ENCODE measurements at regions of chr7 and their contacts with region 1.

Region 1: GRCh38 chr7:19754521-19755116 is 18.8 kb downstream of the TMEM196 start:
- DNase-seq: peak in 1 of 2 experiments; percentile 48
- H3K4me3 ChIP-seq: no peak overlapping the region
- H3K27ac ChIP-seq: no peak overlapping the region
- H3K4me1 ChIP-seq: 0 out of 2 replicates have a peak, but pooled peaks cover 5% of the 10 kb centered on the region
- H3K27me3 ChIP-seq: no peaks in the 10 kb centered on the region
- CTCF ChIP-seq: peak; percentile 99

Region 2: DNA sequence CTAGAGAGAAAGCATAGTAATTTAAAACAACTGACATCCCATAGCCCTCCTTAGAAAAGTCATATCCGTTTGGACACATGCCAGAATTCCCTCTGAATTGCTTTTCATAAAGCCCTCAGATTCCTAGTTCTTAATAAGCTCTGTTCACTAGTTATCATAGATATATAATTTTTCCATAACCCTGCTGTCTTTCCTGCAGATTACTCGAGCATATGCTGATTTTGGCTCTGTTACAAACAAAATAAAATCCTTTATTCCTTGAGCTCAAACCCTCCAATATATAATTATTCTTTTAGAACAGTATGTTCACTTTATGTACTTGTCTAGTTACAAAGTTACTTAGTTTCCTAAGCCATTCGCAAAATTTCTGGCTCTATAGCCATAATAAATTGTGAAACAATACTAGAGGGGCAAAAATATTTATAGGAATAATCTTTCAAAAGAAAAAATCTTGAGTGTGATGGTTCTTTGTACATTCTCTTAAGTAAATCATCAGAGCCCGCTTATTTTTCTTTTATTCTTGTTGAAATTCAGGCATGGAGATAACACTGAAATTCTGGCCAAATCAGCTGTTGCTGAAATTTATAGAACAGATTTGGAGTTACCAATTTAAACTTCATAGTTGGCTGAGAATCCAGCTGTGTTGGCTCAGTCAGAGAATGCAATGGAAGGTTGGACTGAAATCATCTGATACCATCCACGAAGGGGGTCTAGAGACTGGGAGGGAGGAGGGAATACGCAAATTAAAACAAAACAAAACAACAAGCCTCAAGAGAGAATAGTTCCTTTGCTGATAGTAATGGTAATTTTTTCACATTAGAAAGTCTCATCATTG is 164.9 kb after region 1 on chr7:
- CTCF ChIA-PET with region 1: no interaction called
- POLR2A ChIA-PET with region 1: no interaction called
- intact Hi-C with region 1: loop called (anchors 10 kb)
- DNase-seq: no peak
- H3K4me3 ChIP-seq: no peak overlapping the region
- H3K27ac ChIP-seq: no peak overlapping the region
- H3K4me1 ChIP-seq: peaks cover 17% of the 10 kb centered on the region
- H3K27me3 ChIP-seq: no peaks in the 10 kb centered on the region
- CTCF ChIP-seq: no peak

Region 3: GRCh38 chr7:19939746-19940145 is 185.1 kb after region 1 on chr7:
- CTCF ChIA-PET with region 1: no interaction called
- POLR2A ChIA-PET with region 1: interaction called, 13 read pairs
- intact Hi-C with region 1: no loop called
- DNase-seq: no peak
- H3K4me3 ChIP-seq: no peak overlapping the region
- H3K27ac ChIP-seq: no peak overlapping the region
- H3K4me1 ChIP-seq: no peaks in the 10 kb centered on the region
- H3K27me3 ChIP-seq: no peaks in the 10 kb centered on the region
- CTCF ChIP-seq: no peak

Region 4: DNA sequence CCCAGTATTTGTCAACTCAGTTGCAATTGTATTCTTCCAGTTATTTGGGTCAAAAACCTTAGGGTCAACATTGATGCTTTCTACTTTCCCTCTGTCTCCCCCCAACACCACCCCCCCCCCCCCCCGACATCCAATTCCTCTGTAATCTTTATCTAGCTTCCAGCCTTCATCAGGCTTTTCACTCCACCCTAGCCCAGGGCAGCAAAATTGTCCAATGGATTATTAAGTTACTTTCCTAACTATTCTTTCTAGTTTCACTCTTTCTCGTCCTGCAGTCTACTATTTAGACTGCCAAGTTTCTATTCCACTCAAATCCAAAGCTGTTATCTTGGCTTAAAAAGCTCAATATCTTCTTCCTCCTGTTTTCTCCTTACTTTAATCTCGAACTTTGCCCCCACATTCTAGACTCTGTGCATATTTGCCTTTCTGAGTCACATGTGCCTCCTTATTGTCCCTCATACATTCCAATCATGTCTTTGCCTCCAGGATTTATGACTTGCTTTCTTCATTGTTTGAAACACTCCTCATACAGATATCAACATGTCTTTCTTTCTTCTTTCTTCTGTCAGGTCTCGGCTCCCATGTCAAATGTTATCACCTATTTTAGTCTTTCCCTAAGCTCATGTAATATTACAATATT is 215.4 kb after region 1 on chr7:
- CTCF ChIA-PET with region 1: no interaction called
- POLR2A ChIA-PET with region 1: no interaction called
- intact Hi-C with region 1: loop called (anchors 5 kb)
- DNase-seq: peak; percentile 20 to 87
- H3K4me3 ChIP-seq: peak overlapping the region; percentile 7; the same call in 1 of the 2 replicates
- H3K27ac ChIP-seq: peak overlapping the region; percentile 48
- H3K4me1 ChIP-seq: peaks cover 28% of the 10 kb centered on the region
- H3K27me3 ChIP-seq: no peaks in the 10 kb centered on the region
- CTCF ChIP-seq: no peak

Region 5: DNA sequence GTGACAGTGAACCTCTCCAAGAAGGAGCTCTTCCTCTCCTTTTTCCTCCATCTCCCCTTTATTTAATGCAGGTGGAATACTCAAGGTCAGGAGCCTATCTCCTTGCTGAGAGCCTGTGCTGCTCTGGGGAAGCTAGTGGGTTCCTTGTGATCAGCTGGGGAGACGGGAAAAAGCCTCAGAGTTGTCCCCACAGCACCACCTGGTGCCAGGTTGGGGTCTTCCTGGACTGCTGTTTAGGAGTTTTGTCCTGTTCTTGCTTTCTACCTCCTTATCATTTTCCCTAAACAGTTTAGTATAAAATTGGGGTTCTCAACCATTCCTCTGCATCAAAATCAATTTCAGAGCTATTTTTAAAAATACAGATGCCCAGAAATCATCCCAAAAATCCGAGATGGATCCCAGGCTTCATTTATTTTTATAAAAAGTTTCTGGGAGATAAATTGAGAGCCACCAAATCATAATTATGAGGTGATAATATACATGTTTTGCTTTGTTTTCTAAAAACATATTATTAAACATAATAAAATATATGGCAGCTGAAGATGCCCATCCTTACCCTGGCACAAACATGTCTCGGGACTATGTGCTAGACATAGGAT is 418.2 kb after region 1 on chr7:
- CTCF ChIA-PET with region 1: interaction called, 3 read pairs
- POLR2A ChIA-PET with region 1: no interaction called
- intact Hi-C with region 1: loop called (anchors 2 kb)
- DNase-seq: peak in 1 of 2 experiments; percentile 42
- H3K4me3 ChIP-seq: no peak overlapping the region
- H3K27ac ChIP-seq: no peak overlapping the region
- H3K4me1 ChIP-seq: no peaks in the 10 kb centered on the region
- H3K27me3 ChIP-seq: no peaks in the 10 kb centered on the region
- CTCF ChIP-seq: peak; percentile 65

Region 6: GRCh38 chr7:20310963-20311742 is 556.5 kb after region 1 on chr7:
- CTCF ChIA-PET with region 1: interaction called, 3 read pairs
- POLR2A ChIA-PET with region 1: no interaction called
- intact Hi-C with region 1: loop called (anchors 1 kb)
- DNase-seq: peak in 1 of 2 experiments; percentile 56
- H3K4me3 ChIP-seq: no peak overlapping the region
- H3K27ac ChIP-seq: no peak overlapping the region
- H3K4me1 ChIP-seq: no peaks in the 10 kb centered on the region
- H3K27me3 ChIP-seq: no peaks in the 10 kb centered on the region
- CTCF ChIP-seq: peak; percentile 92

Measured in PC-9 (cell line).